Transverse colon (tissue), 4 donors: ENCODE measurements at regions of chr2 and their contacts with region 1.

Region 1: GRCh38 chr2:111659416-111660281 is 224.3 kb downstream of the ANAPC1 start:
- DNase-seq: peak; percentile 65
- H3K4me3 ChIP-seq: no peak overlapping the region
- H3K27ac ChIP-seq: peak overlapping the region in 3 of 4 donors; percentile 13 to 38 (median 21)
- H3K4me1 ChIP-seq: peaks cover 0 to 15% (median 2%) of the 10 kb centered on the region in 4 donors
- H3K27me3 ChIP-seq: no peaks in the 10 kb centered on the region
- CTCF ChIP-seq: no peak
- EP300 ChIP-seq: no peak
- POLR2A ChIP-seq: no peak

Region 2: DNA sequence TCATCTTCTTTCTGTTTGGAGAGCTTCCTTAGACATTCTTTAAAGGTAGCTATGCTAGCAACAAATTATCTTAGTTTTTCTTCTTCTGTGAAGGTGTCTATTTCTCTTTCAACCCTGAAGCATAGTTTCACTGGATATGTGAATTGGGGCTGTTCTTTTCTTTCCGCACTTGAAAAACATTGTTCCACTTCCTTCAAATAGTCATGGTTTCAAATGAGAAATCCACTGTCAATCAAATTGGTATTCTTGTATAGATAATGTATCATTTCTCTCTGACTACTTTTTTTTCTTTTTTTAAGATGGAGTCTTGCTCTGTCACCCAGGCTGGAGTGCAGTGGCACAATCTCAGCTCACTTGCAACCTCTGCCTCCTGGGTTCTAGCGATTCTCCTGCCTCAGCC is 29.7 kb before region 1 on chr2:
- in situ Hi-C with region 1: no loop called
- intact Hi-C with region 1: loop called (anchors 1 kb)
- DNase-seq: no peak
- H3K4me3 ChIP-seq: no peak overlapping the region
- H3K27ac ChIP-seq: no peak overlapping the region
- H3K4me1 ChIP-seq: no peaks in the 10 kb centered on the region
- H3K27me3 ChIP-seq: no peaks in the 10 kb centered on the region
- CTCF ChIP-seq: no peak
- EP300 ChIP-seq: no peak
- POLR2A ChIP-seq: no peak